Activated CD4-positive, alpha-beta T cell treated with anti-CD3 and anti-CD28 coated beads for 36 hours (primary cell): ENCODE measurements at regions of chr2 and their contacts with region 1.

Region 1: GRCh38 chr2:143230506-143231253 is 101.5 kb downstream of the ARHGAP15 start:
- DNase-seq: no peak
- ATAC-seq: no peak
- H3K4me3 Mint-ChIP-seq: no peak overlapping the region
- H3K27ac Mint-ChIP-seq: no peak overlapping the region
- H3K4me1 Mint-ChIP-seq: peaks cover 25% of the 10 kb centered on the region
- H3K27me3 Mint-ChIP-seq: no peaks in the 10 kb centered on the region

Region 2: GRCh38 chr2:143252138-143252907 is 21.6 kb after region 1 on chr2:
- CTCF ChIA-PET with region 1: interaction called, 6 read pairs
- POLR2A ChIA-PET with region 1: no interaction called
- intact Hi-C with region 1: loop called (anchors 2 kb)
- DNase-seq: no peak
- ATAC-seq: peak; percentile 46
- H3K4me3 Mint-ChIP-seq: peak overlapping the region; percentile 49
- H3K27ac Mint-ChIP-seq: peak overlapping the region; percentile 76
- H3K4me1 Mint-ChIP-seq: peaks cover 65% of the 10 kb centered on the region
- H3K27me3 Mint-ChIP-seq: no peaks in the 10 kb centered on the region

Region 3: GRCh38 chr2:143397884-143398614 is 167.4 kb after region 1 on chr2:
- CTCF ChIA-PET with region 1: no interaction called
- POLR2A ChIA-PET with region 1: no interaction called
- intact Hi-C with region 1: no loop called
- DNase-seq: no peak
- ATAC-seq: peak; percentile 94
- H3K4me3 Mint-ChIP-seq: no peak overlapping the region
- H3K27ac Mint-ChIP-seq: no peak overlapping the region
- H3K4me1 Mint-ChIP-seq: peaks cover 55% of the 10 kb centered on the region
- H3K27me3 Mint-ChIP-seq: no peaks in the 10 kb centered on the region